ENCODE measurements at regions of chr3 and their contacts with region 1.

Region 1: DNA sequence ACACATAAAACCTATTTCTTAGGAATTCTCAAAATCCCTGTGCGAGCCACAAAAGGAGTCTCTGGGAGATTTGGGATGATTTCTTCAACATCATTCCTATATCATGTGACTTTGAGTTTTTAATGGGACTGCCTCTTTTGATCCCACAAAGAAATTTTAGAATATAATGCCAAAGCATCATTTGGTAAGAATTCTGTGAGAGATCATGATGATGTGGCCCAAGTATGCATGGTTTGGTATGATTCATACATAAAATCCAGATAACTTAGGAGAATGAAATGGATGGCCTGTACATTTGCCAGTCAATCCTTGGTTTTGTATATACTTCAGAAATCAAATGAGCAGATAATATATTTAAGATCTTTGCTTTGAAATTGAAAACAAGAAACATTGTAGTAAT is 61.3 kb downstream of the UBE2E2 start:
- DNase-seq: no peak
- H3K4me3 ChIP-seq: no peak overlapping the region
- H3K27ac ChIP-seq: no peak overlapping the region
- H3K4me1 ChIP-seq: no peaks in the 10 kb centered on the region
- H3K27me3 ChIP-seq: no peaks in the 10 kb centered on the region
- CTCF ChIP-seq: no peak
- POLR2A ChIP-seq: no peak

Region 2: DNA sequence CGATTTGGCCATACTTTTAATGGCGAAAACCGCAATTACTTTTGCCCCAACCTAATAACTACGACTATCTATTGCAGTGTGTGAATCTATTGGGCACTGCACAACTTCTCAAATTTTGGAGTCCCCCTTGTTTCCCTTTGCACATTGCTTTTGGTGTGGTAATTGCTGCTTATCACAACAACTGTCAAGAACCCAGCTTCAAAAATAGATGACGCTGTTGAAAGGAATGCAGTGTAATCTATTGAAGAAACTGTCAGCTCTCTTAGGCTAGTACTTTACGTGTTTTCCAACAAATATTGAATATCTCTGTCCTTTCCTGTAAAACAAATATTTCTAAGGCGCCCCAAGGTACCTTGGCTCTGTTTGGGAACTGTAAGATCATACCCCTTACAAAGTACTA is 284.1 kb before region 1 on chr3:
- intact Hi-C with region 1: loop called (anchors 10 kb)
- DNase-seq: no peak
- H3K4me3 ChIP-seq: no peak overlapping the region
- H3K27ac ChIP-seq: no peak overlapping the region
- H3K4me1 ChIP-seq: no peaks in the 10 kb centered on the region
- H3K27me3 ChIP-seq: no peaks in the 10 kb centered on the region
- CTCF ChIP-seq: no peak
- POLR2A ChIP-seq: no peak

Region 3: GRCh38 chr3:24639481-24640329 is 1375.3 kb after region 1 on chr3:
- intact Hi-C with region 1: loop called (anchors 5 kb)
- DNase-seq: no peak
- H3K4me3 ChIP-seq: no peak overlapping the region
- H3K27ac ChIP-seq: no peak overlapping the region
- H3K4me1 ChIP-seq: peaks cover 10% of the 10 kb centered on the region
- H3K27me3 ChIP-seq: no peaks in the 10 kb centered on the region
- CTCF ChIP-seq: no peak
- POLR2A ChIP-seq: no peak

Measured in vagina (tissue), 2 donors.